ENCODE measurements at regions of chr18 and their contacts with region 1.

Region 1: DNA sequence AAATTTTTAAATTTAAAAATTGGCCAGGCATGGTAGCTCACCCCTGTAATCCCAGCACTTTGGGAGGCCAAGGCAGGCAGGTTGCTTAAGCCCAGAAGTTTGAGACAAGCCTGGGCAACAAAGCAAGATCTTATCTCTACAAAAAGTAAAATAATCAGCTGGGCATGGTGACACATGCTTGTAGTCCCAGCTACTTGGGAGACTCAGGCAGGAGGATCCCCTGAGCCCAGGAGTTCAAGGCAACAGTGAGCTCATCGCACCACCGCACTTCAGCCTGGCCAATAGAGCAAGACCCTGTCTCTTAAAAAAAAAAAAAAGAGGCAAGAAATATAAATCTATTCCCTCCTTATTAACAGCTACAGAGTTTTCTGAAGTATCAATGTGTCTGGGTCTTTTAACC is 51.9 kb downstream of the ESCO1 start:
- DNase-seq: no peak
- ATAC-seq: no peak
- H3K4me3 ChIP-seq: no peak overlapping the region
- H3K27ac ChIP-seq: no peak overlapping the region
- H3K4me1 ChIP-seq: no peaks in the 10 kb centered on the region
- H3K27me3 ChIP-seq: no peaks in the 10 kb centered on the region
- CTCF ChIP-seq: no peak
- POLR2A ChIP-seq: no peak
- RAD21 ChIP-seq: no peak

Region 2: GRCh38 chr18:21593540-21594257 is 45.1 kb after region 1 on chr18:
- CTCF ChIA-PET with region 1: no interaction called
- POLR2A ChIA-PET with region 1: no interaction called
- RAD21 ChIA-PET with region 1: no interaction called
- intact Hi-C with region 1: loop called (anchors 5 kb)
- DNase-seq: no peak
- ATAC-seq: peak; percentile 76
- H3K4me3 ChIP-seq: no peak overlapping the region
- H3K27ac ChIP-seq: no peak overlapping the region
- H3K4me1 ChIP-seq: peaks cover 3 to 4% of the 10 kb centered on the region in 2 experiments
- H3K27me3 ChIP-seq: no peaks in the 10 kb centered on the region
- CTCF ChIP-seq: 0 out of 6 replicates have a peak, but pooled peaks of 1 of the 3 experiments have one; percentile 26
- POLR2A ChIP-seq: no peak
- RAD21 ChIP-seq: no peak

Region 3: DNA sequence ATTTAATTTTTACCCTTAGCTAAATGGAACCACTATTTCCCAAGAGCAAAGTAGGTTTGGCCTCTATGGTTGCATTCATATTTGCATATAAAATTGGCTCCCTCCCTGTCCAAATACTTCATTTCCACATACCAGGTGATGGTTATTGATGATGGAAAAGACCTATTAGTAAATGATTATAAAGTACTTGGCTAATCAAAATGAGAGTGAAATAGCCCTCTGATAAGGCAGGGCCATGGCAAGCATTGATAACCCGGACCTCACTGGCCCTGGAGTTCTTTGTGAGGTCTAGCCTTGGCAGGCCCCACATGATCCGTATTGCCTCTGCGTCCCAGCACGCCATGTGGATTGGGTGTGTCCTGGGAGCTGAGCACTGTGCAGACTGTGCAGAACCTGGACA is 419.7 kb after region 1 on chr18:
- CTCF ChIA-PET with region 1: no interaction called
- POLR2A ChIA-PET with region 1: no interaction called
- RAD21 ChIA-PET with region 1: no interaction called
- intact Hi-C with region 1: no loop called
- DNase-seq: no peak
- ATAC-seq: no peak
- H3K4me3 ChIP-seq: no peak overlapping the region
- H3K27ac ChIP-seq: no peak overlapping the region
- H3K4me1 ChIP-seq: no peaks in the 10 kb centered on the region
- H3K27me3 ChIP-seq: no peaks in the 10 kb centered on the region
- CTCF ChIP-seq: no peak
- POLR2A ChIP-seq: no peak
- RAD21 ChIP-seq: no peak

Measured in HCT116 (cell line).